H1 (cell line): ENCODE measurements at regions of chr10 and their contacts with region 1.

Region 1: DNA sequence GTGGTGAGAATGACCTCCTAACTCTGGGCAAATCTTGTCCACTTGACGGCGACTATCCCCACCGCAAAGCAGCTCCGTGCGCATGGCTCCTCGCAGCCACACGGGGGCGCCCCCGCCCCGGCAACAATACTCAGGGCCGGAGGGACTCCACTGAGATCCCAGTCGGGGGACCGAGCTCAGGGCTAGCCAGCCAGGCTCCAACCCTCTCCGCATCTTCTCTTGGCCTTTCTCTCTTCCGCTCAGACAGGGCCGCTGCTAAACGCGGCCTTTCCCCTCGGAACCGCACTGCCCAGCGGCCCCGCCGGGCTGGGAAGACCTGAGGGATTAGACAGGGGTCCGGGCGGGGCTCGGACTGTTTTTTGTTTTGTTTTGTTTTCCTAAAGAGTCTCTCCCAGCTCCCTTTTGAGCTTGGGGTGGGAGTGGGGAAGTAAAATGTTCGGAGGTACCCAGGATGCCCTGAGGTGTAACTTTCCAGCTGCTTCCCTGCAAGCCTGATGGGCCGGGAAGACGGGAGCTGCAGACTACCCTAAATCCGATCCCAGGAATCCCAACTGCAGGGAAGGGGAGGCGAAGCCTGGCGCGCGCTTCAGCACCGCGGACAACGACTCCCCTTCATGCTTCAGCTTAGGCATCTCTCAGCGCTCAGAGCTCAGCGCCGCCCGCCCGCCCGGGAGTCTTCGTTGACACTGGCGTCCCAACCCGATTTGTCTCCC is 2.7 kb downstream of the KCNIP2 start:
- DNase-seq: peak in 1 of 2 experiments; percentile 96
- H3K4me3 ChIP-seq: peak overlapping the region; percentile 70 to 81 (median 76); a peak in 7 of 8 replicates
- H3K27ac ChIP-seq: no peak overlapping the region
- H3K4me1 ChIP-seq: peaks cover 3 to 21% (median 12%) of the 10 kb centered on the region in 4 experiments
- H3K27me3 ChIP-seq: peaks cover 3 to 18% (median 18%) of the 10 kb centered on the region in 4 experiments
- CTCF ChIP-seq: peak; percentile 97 to 99 (median 98)
- EP300 ChIP-seq: no peak
- POLR2A ChIP-seq: no peak
- RAD21 ChIP-seq: peak; percentile 91 to 93

Region 2: GRCh38 chr10:101655570-101655969 is 185.3 kb before region 1 on chr10:
- CTCF ChIA-PET with region 1: no interaction called
- POLR2A ChIA-PET with region 1: no interaction called
- DNase-seq: no peak
- H3K4me3 ChIP-seq: no peak overlapping the region
- H3K27ac ChIP-seq: no peak overlapping the region
- H3K4me1 ChIP-seq: peaks cover 9 to 21% (median 9%) of the 10 kb centered on the region in 4 experiments; a peak in 6 of 7 replicates
- H3K27me3 ChIP-seq: no peaks in the 10 kb centered on the region
- CTCF ChIP-seq: no peak
- EP300 ChIP-seq: no peak
- POLR2A ChIP-seq: no peak
- RAD21 ChIP-seq: no peak

Region 3: GRCh38 chr10:101818119-101818871 is 22.6 kb before region 1 on chr10 and contains the start of gene OGA:
- CTCF ChIA-PET with region 1: interaction called, 46 read pairs
- POLR2A ChIA-PET with region 1: interaction called, 100 read pairs
- DNase-seq: peak; percentile 95 to 99
- H3K4me3 ChIP-seq: peak within 1 kb of the TSS; percentile 77 to 98 (median 90)
- H3K27ac ChIP-seq: peak within 1 kb of the TSS; percentile 100
- H3K4me1 ChIP-seq: peaks cover 0 to 5% (median 0%) of the 10 kb centered on the region in 4 experiments; a peak in 3 of 7 replicates
- H3K27me3 ChIP-seq: no peaks in the 10 kb centered on the region
- CTCF ChIP-seq: no peak
- EP300 ChIP-seq: peak in 1 of 2 experiments; percentile 100; a peak in 2 of 3 replicates
- POLR2A ChIP-seq: peak; percentile 83 to 88
- RAD21 ChIP-seq: no peak
- total RNA-seq, gene OGA: 104 and 107 TPM in 2 replicates

Region 4: GRCh38 chr10:101867931-101868330 is 27.0 kb after region 1 on chr10:
- CTCF ChIA-PET with region 1: interaction called, 11 read pairs
- POLR2A ChIA-PET with region 1: no interaction called
- DNase-seq: no peak
- H3K4me3 ChIP-seq: no peak overlapping the region
- H3K27ac ChIP-seq: no peak overlapping the region
- H3K4me1 ChIP-seq: no peaks in the 10 kb centered on the region
- H3K27me3 ChIP-seq: no peaks in the 10 kb centered on the region
- CTCF ChIP-seq: no peak
- EP300 ChIP-seq: no peak
- POLR2A ChIP-seq: no peak
- RAD21 ChIP-seq: no peak

Region 5: DNA sequence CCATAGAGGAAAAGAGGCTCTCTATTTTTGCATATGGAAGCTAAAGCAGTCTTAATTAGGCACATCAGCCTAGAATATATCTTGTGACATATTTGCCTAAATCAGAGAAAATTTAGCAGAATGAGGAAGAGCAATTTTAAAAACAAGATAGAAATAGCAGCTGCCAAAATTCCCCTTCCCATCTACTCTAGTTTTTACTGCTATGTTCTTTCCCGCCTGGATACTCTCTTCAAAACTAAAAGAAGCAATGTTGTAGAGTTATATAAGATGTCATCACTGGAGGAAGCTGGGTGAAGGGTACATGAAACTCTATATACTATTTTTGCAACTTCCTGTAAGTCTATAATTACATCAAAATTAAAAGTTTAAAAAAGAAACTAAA is 128.0 kb after region 1 on chr10:
- CTCF ChIA-PET with region 1: interaction called, 11 read pairs
- POLR2A ChIA-PET with region 1: no interaction called
- DNase-seq: no peak
- H3K4me3 ChIP-seq: no peak overlapping the region
- H3K27ac ChIP-seq: no peak overlapping the region
- H3K4me1 ChIP-seq: peaks cover 0 to 2% (median 0%) of the 10 kb centered on the region in 4 experiments; a peak in 1 of 7 replicates
- H3K27me3 ChIP-seq: no peaks in the 10 kb centered on the region
- CTCF ChIP-seq: no peak
- EP300 ChIP-seq: no peak
- POLR2A ChIP-seq: no peak
- RAD21 ChIP-seq: no peak

Region 6: GRCh38 chr10:102016416-102016815 is 175.5 kb after region 1 on chr10:
- CTCF ChIA-PET with region 1: interaction called, 154 read pairs
- POLR2A ChIA-PET with region 1: no interaction called
- DNase-seq: no peak
- H3K4me3 ChIP-seq: no peak overlapping the region
- H3K27ac ChIP-seq: no peak overlapping the region
- H3K4me1 ChIP-seq: no peaks in the 10 kb centered on the region; a peak in 1 of 7 replicates
- H3K27me3 ChIP-seq: no peaks in the 10 kb centered on the region
- CTCF ChIP-seq: no peak
- EP300 ChIP-seq: no peak
- POLR2A ChIP-seq: no peak
- RAD21 ChIP-seq: no peak

Region 7: GRCh38 chr10:102064868-102065560 is 224.1 kb after region 1 on chr10 and contains the start of gene HPS6:
- CTCF ChIA-PET with region 1: interaction called, 33 read pairs
- POLR2A ChIA-PET with region 1: no interaction called
- DNase-seq: peak in 1 of 2 experiments; percentile 85
- H3K4me3 ChIP-seq: peak within 1 kb of the TSS; percentile 71 to 86 (median 77)
- H3K27ac ChIP-seq: no peak within 1 kb of the TSS
- H3K4me1 ChIP-seq: peaks cover 0 to 5% (median 4%) of the 10 kb centered on the region in 4 experiments; a peak in 5 of 7 replicates
- H3K27me3 ChIP-seq: peaks cover 0 to 3% (median 1%) of the 10 kb centered on the region in 4 experiments; a peak in 1 of 7 replicates
- CTCF ChIP-seq: no peak
- EP300 ChIP-seq: no peak
- POLR2A ChIP-seq: peak in 1 of 2 experiments; percentile 51; a peak in 1 of 3 replicates
- RAD21 ChIP-seq: no peak
- total RNA-seq, gene HPS6: 16.2 and 17.7 TPM in 2 replicates